IMR-90 (cell line): ENCODE measurements at regions of chr19 and their contacts with region 1.

Region 1: GRCh38 chr19:57240311-57241090 is at the start of gene ZNF805:
- DNase-seq: peak; percentile 89
- ATAC-seq: peak; percentile 99
- H3K4me3 ChIP-seq: peak within 1 kb of the TSS; percentile 95
- H3K27ac ChIP-seq: peak within 1 kb of the TSS; percentile 91
- H3K4me1 ChIP-seq: peaks cover 7% of the 10 kb centered on the region
- H3K27me3 ChIP-seq: no peaks in the 10 kb centered on the region
- CTCF ChIP-seq: no peak
- POLR2A ChIP-seq: peak; percentile 82
- RAD21 ChIP-seq: peak; percentile 10; the same call in 1 of the 2 replicates
- total RNA-seq, gene ZNF805: 26.1 and 32.3 TPM in 2 replicates

Region 2: GRCh38 chr19:56946159-56946558 is 294.3 kb before region 1 on chr19:
- CTCF ChIA-PET with region 1: no interaction called
- POLR2A ChIA-PET with region 1: no interaction called
- dilution Hi-C with region 1: no loop called
- in situ Hi-C with region 1: no loop called
- intact Hi-C with region 1: no loop called
- DNase-seq: no peak
- ATAC-seq: no peak
- H3K4me3 ChIP-seq: no peak overlapping the region
- H3K27ac ChIP-seq: no peak overlapping the region
- H3K4me1 ChIP-seq: no peaks in the 10 kb centered on the region
- H3K27me3 ChIP-seq: no peaks in the 10 kb centered on the region
- CTCF ChIP-seq: no peak
- POLR2A ChIP-seq: no peak
- RAD21 ChIP-seq: no peak

Region 3: DNA sequence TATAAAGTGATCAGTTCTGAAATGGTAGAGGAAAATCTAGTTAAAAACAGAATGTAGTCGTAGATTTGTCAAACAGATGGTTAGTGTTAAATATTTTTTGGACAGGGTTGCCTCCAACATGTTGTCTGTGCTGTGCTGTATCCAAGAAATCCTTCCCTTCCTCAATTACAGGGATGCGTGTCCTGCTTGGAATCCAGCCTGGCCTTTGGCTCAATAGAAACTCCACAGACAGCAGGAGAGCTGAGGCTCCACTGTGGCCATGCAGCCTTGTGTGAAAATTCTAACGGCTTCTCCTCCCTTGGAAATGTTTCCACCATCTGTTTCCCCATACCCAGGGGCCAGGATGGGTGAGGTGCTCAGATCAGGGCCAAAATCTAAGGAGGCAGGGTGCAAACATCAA is 188.4 kb before region 1 on chr19:
- CTCF ChIA-PET with region 1: no interaction called
- POLR2A ChIA-PET with region 1: no interaction called
- dilution Hi-C with region 1: no loop called
- in situ Hi-C with region 1: no loop called
- intact Hi-C with region 1: no loop called
- DNase-seq: no peak
- ATAC-seq: no peak
- H3K4me3 ChIP-seq: no peak overlapping the region
- H3K27ac ChIP-seq: no peak overlapping the region
- H3K4me1 ChIP-seq: no peaks in the 10 kb centered on the region
- H3K27me3 ChIP-seq: no peaks in the 10 kb centered on the region
- CTCF ChIP-seq: no peak
- POLR2A ChIP-seq: no peak
- RAD21 ChIP-seq: no peak

Region 4: DNA sequence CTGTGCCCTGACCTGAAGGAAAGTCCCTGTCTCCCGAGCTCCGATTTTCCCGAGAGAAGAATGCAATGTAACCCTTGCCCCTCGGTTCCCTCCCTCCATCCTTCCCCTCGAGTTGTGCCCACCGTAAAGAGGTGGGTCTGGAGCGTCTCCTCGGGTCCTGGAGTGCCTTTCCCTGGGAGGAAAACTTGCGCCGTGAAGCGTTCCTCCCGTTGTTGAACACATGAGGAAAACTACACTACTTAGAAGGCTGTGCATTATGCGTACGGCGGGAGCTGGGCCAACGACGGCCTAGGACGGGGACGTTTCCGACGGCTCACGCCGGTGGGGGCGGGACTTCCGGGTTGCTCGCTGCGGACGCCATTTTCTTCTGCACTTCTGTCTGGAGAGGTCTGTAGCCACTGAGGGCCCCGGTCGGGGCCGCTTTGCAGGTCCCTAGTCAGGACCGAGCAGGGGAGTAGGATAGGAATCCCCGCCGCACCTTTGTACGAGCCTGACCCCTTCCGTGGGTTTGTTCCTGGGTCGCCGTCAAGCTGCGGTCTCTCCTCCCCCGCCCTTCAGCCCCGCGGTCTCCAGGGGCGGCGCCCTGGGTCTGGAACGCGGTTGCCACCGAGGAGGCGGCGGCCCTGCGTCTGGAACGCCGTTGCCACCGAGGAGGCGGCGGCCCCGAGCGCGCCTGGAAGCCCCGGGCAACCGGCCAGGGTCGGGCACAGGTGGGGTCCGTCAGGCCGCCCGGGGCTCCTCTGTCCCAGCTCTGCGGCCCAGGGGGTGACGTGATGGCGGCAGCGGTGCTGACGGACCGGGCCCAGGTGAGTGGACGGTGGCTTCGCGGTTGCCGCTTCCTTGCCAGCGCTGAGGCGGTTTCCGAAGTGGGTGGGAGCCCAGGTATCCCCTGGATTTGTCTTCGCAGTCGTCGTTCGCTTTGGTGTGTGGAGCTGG is 49.1 kb before region 1 on chr19 and contains the start of gene ZNF264:
- CTCF ChIA-PET with region 1: no interaction called
- POLR2A ChIA-PET with region 1: no interaction called
- dilution Hi-C with region 1: no loop called
- in situ Hi-C with region 1: no loop called
- intact Hi-C with region 1: loop called (anchors 2 kb)
- DNase-seq: peak; percentile 85
- ATAC-seq: peak; percentile 97
- H3K4me3 ChIP-seq: peak within 1 kb of the TSS; percentile 93
- H3K27ac ChIP-seq: peak within 1 kb of the TSS; percentile 97
- H3K4me1 ChIP-seq: no peaks in the 10 kb centered on the region; the same call in 1 of the 2 replicates
- H3K27me3 ChIP-seq: no peaks in the 10 kb centered on the region
- CTCF ChIP-seq: 0 out of 2 replicates have a peak, but pooled peaks have one; percentile 22
- POLR2A ChIP-seq: peak; percentile 80
- RAD21 ChIP-seq: 0 out of 2 replicates have a peak, but pooled peaks have one; percentile 1
- total RNA-seq, gene ZNF264: 23.9 and 31.9 TPM in 2 replicates

Region 5: DNA sequence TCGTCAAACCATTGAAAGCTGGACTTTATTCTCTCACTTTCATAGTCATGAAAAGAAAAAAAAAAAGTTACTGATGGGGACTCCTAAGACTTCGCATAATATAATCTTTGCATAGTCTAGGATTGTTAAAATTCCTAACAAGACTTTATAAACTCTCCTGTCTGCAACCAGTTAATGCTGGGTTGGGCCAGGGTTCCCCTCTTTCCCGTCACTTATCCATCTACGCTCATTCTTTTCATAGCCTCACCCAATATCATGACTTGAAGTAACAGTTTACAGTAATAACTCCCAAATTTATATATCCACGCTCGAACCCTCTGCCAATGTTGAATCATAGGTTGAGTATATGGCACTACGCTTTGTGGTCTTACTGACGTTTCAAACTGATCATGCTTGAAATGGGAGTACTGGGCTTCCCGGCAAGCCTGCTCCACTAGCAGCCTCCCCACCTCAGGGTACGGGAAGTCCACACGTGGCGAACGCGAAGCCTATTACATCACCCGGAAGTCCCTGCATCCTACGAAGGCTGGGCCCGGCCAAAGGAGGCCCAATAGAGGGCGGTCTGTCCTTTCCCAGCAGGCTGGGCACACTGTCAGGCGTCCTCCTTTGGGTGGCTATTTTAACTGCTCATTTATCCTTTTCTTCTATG is 39.0 kb after region 1 on chr19:
- CTCF ChIA-PET with region 1: no interaction called
- POLR2A ChIA-PET with region 1: no interaction called
- dilution Hi-C with region 1: no loop called
- in situ Hi-C with region 1: no loop called
- intact Hi-C with region 1: loop called (anchors 1 kb)
- DNase-seq: peak; percentile 97
- ATAC-seq: peak; percentile 89
- H3K4me3 ChIP-seq: peak overlapping the region; percentile 57
- H3K27ac ChIP-seq: peak overlapping the region; percentile 93
- H3K4me1 ChIP-seq: peaks cover 5% of the 10 kb centered on the region
- H3K27me3 ChIP-seq: no peaks in the 10 kb centered on the region
- CTCF ChIP-seq: peak; percentile 41
- POLR2A ChIP-seq: peak; percentile 96
- RAD21 ChIP-seq: no peak

Region 6: GRCh38 chr19:57338877-57339276 is 98.4 kb after region 1 on chr19:
- CTCF ChIA-PET with region 1: no interaction called
- POLR2A ChIA-PET with region 1: no interaction called
- dilution Hi-C with region 1: no loop called
- in situ Hi-C with region 1: no loop called
- intact Hi-C with region 1: no loop called
- DNase-seq: peak; percentile 66
- ATAC-seq: peak; percentile 62
- H3K4me3 ChIP-seq: no peak overlapping the region
- H3K27ac ChIP-seq: no peak overlapping the region
- H3K4me1 ChIP-seq: no peaks in the 10 kb centered on the region
- H3K27me3 ChIP-seq: no peaks in the 10 kb centered on the region
- CTCF ChIP-seq: no peak
- POLR2A ChIP-seq: no peak
- RAD21 ChIP-seq: no peak

Region 7: GRCh38 chr19:57410877-57411671 is 170.6 kb after region 1 on chr19 and contains the start of gene ZNF17:
- CTCF ChIA-PET with region 1: no interaction called
- POLR2A ChIA-PET with region 1: no interaction called
- dilution Hi-C with region 1: no loop called
- in situ Hi-C with region 1: no loop called
- intact Hi-C with region 1: no loop called
- DNase-seq: peak; percentile 94
- ATAC-seq: peak; percentile 100
- H3K4me3 ChIP-seq: peak within 1 kb of the TSS; percentile 65
- H3K27ac ChIP-seq: peak within 1 kb of the TSS; percentile 53
- H3K4me1 ChIP-seq: peaks cover 3% of the 10 kb centered on the region; the same call in 1 of the 2 replicates
- H3K27me3 ChIP-seq: no peaks in the 10 kb centered on the region
- CTCF ChIP-seq: no peak
- POLR2A ChIP-seq: no peak
- RAD21 ChIP-seq: no peak
- total RNA-seq, gene ZNF17: 11.7 and 17.4 TPM in 2 replicates